CD8-positive, alpha-beta T cell (primary cell): ENCODE measurements at regions of chrX and their contacts with region 1.

Region 1: GRCh38 chrX:16882702-16883486 is 12.7 kb upstream of the RBBP7 start:
- DNase-seq: peak; percentile 44 to 79 (median 71)
- ATAC-seq: peak; percentile 81
- H3K4me3 ChIP-seq: peak overlapping the region; percentile 56 to 72
- H3K4me3 Mint-ChIP-seq: peak overlapping the region; percentile 79
- H3K27ac ChIP-seq: peak overlapping the region; percentile 45 to 66
- H3K27ac Mint-ChIP-seq: peak overlapping the region; percentile 83
- H3K4me1 ChIP-seq: peaks cover 3% of the 10 kb centered on the region
- H3K4me1 Mint-ChIP-seq: peaks cover 9% of the 10 kb centered on the region
- H3K27me3 ChIP-seq: no peaks in the 10 kb centered on the region
- H3K27me3 Mint-ChIP-seq: no peaks in the 10 kb centered on the region
- CTCF ChIP-seq: peak; percentile 70

Region 2: GRCh38 chrX:16946361-16946964 is 63.6 kb after region 1 on chrX and contains the start of gene REPS2:
- CTCF ChIA-PET with region 1: interaction called, 3 read pairs
- POLR2A ChIA-PET with region 1: no interaction called
- intact Hi-C with region 1: loop called in 1 of 2 experiments (anchors 2 kb)
- DNase-seq: peak; percentile 58 to 87 (median 75)
- ATAC-seq: peak; percentile 97
- H3K4me3 ChIP-seq: peak within 1 kb of the TSS; percentile 46 to 54
- H3K4me3 Mint-ChIP-seq: peak within 1 kb of the TSS; percentile 81
- H3K27ac ChIP-seq: peak within 1 kb of the TSS in 1 of 2 experiments; percentile 33
- H3K27ac Mint-ChIP-seq: no peak within 1 kb of the TSS
- H3K4me1 ChIP-seq: peaks cover 3% of the 10 kb centered on the region
- H3K4me1 Mint-ChIP-seq: peaks cover 7% of the 10 kb centered on the region
- H3K27me3 ChIP-seq: no peaks in the 10 kb centered on the region
- H3K27me3 Mint-ChIP-seq: peaks cover 10% of the 10 kb centered on the region
- CTCF ChIP-seq: no peak
- total RNA-seq, gene REPS2: 0.11 TPM in 1 of 2 experiments, not detected in the other

Region 3: GRCh38 chrX:17046478-17047097 is 163.7 kb after region 1 on chrX:
- CTCF ChIA-PET with region 1: interaction called, 7 read pairs
- POLR2A ChIA-PET with region 1: no interaction called
- intact Hi-C with region 1: loop called (anchors 2 kb)
- DNase-seq: peak in 6 of 9 experiments; percentile 2 to 53 (median 28)
- ATAC-seq: peak; percentile 59
- H3K4me3 ChIP-seq: no peak overlapping the region
- H3K4me3 Mint-ChIP-seq: no peak overlapping the region
- H3K27ac ChIP-seq: no peak overlapping the region
- H3K27ac Mint-ChIP-seq: no peak overlapping the region
- H3K4me1 ChIP-seq: no peaks in the 10 kb centered on the region
- H3K4me1 Mint-ChIP-seq: no peaks in the 10 kb centered on the region
- H3K27me3 ChIP-seq: no peaks in the 10 kb centered on the region
- H3K27me3 Mint-ChIP-seq: no peaks in the 10 kb centered on the region
- CTCF ChIP-seq: peak; percentile 40

Region 4: GRCh38 chrX:17736856-17737706 is 854.2 kb after region 1 on chrX and contains the start of gene SCML1:
- CTCF ChIA-PET with region 1: no interaction called
- POLR2A ChIA-PET with region 1: no interaction called
- intact Hi-C with region 1: loop called in 1 of 2 experiments (anchors 10 kb)
- DNase-seq: peak; percentile 64 to 90 (median 86)
- ATAC-seq: peak; percentile 62
- H3K4me3 ChIP-seq: peak within 1 kb of the TSS; percentile 51 to 92
- H3K4me3 Mint-ChIP-seq: peak within 1 kb of the TSS; percentile 87
- H3K27ac ChIP-seq: peak within 1 kb of the TSS; percentile 88 to 95
- H3K27ac Mint-ChIP-seq: peak within 1 kb of the TSS; percentile 91
- H3K4me1 ChIP-seq: peaks cover 9% of the 10 kb centered on the region
- H3K4me1 Mint-ChIP-seq: peaks cover 35% of the 10 kb centered on the region
- H3K27me3 ChIP-seq: no peaks in the 10 kb centered on the region
- H3K27me3 Mint-ChIP-seq: no peaks in the 10 kb centered on the region
- CTCF ChIP-seq: no peak
- total RNA-seq, gene SCML1: 50.6 to 52.2 TPM